ENCODE measurements at regions of chr19 and their contacts with region 1.

Region 1: DNA sequence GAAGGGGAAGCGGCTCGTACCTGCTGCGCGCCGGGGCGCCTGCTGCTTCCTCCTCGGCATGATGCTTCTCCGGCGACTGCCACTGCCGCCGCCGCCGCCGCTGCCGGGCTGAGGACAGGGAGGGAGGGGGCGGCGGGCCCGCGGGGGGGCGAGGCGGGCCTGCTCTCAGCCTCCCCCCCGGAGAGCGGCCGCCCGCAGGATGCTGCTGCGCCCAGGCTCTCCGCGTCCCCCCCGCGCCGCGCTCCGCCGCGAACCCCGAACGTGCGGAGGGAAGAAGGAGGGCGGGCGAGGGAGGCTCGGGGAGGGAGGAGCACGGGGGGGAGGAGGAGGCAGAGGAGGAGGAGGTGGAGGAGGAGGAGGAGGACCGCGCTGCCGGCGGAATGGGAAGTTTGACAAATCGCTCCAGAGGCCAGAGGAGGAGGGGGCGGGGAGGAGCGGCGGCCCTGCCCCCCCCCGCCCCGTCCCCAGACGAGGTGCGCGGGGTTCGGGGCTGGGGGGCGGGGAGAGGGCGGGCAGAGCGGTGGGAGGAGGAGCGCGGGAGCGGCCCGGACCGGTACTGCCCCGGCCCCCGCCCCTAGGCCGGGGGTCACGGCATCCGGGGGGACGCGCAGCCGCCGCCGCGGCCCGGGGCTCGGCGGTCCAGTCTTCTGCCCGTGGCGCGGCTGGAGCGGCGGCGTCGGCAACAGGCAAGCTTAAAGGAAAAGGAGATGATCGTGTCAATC is at the start of gene TSHZ3:
- H3K4me3 Mint-ChIP-seq: peak within 1 kb of the TSS; percentile 91
- H3K27ac Mint-ChIP-seq: peak within 1 kb of the TSS; percentile 75
- H3K4me1 Mint-ChIP-seq: peaks cover 52% of the 10 kb centered on the region
- H3K27me3 Mint-ChIP-seq: peaks cover 50% of the 10 kb centered on the region

Region 2: GRCh38 chr19:30870876-30871275 is 478.4 kb before region 1 on chr19:
- intact Hi-C with region 1: loop called (anchors 10 kb)
- H3K4me3 Mint-ChIP-seq: no peak overlapping the region
- H3K27ac Mint-ChIP-seq: no peak overlapping the region
- H3K4me1 Mint-ChIP-seq: peaks cover 9% of the 10 kb centered on the region
- H3K27me3 Mint-ChIP-seq: peaks cover 3% of the 10 kb centered on the region

Region 3: DNA sequence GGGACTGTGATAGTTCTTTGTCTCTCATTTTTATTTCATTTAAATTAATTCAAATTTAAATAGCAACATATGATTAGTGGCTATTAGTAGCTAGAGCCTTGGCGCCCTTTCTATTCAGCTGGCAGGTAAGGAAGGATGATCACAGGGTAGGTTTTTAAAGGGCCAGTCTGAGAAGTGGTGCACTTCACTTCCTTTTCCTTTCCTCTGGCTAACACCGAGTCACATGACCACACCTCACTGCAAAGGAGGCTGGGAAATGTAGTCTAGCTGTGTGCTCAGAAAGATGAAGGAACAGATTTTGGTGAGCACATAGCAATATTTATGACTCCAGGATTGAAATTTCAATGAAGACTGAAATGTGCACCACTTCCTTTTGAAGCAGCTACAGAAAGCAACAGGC is 128.8 kb before region 1 on chr19:
- intact Hi-C with region 1: loop called (anchors 10 kb)
- H3K4me3 Mint-ChIP-seq: no peak overlapping the region
- H3K27ac Mint-ChIP-seq: no peak overlapping the region
- H3K4me1 Mint-ChIP-seq: peaks cover 1% of the 10 kb centered on the region
- H3K27me3 Mint-ChIP-seq: peaks cover 8% of the 10 kb centered on the region

Region 4: GRCh38 chr19:31312009-31312676 is 37.2 kb before region 1 on chr19:
- intact Hi-C with region 1: loop called (anchors 5 kb)
- H3K4me3 Mint-ChIP-seq: peak overlapping the region; percentile 37
- H3K27ac Mint-ChIP-seq: peak overlapping the region; percentile 78
- H3K4me1 Mint-ChIP-seq: peaks cover 96% of the 10 kb centered on the region
- H3K27me3 Mint-ChIP-seq: no peaks in the 10 kb centered on the region

Region 5: GRCh38 chr19:31560086-31561060 is 211.1 kb after region 1 on chr19:
- intact Hi-C with region 1: no loop called
- H3K4me3 Mint-ChIP-seq: no peak overlapping the region
- H3K27ac Mint-ChIP-seq: no peak overlapping the region
- H3K4me1 Mint-ChIP-seq: no peaks in the 10 kb centered on the region
- H3K27me3 Mint-ChIP-seq: no peaks in the 10 kb centered on the region

Region 6: GRCh38 chr19:31627620-31628361 is 278.5 kb after region 1 on chr19:
- intact Hi-C with region 1: no loop called
- H3K4me3 Mint-ChIP-seq: no peak overlapping the region
- H3K27ac Mint-ChIP-seq: no peak overlapping the region
- H3K4me1 Mint-ChIP-seq: no peaks in the 10 kb centered on the region
- H3K27me3 Mint-ChIP-seq: no peaks in the 10 kb centered on the region

Region 7: DNA sequence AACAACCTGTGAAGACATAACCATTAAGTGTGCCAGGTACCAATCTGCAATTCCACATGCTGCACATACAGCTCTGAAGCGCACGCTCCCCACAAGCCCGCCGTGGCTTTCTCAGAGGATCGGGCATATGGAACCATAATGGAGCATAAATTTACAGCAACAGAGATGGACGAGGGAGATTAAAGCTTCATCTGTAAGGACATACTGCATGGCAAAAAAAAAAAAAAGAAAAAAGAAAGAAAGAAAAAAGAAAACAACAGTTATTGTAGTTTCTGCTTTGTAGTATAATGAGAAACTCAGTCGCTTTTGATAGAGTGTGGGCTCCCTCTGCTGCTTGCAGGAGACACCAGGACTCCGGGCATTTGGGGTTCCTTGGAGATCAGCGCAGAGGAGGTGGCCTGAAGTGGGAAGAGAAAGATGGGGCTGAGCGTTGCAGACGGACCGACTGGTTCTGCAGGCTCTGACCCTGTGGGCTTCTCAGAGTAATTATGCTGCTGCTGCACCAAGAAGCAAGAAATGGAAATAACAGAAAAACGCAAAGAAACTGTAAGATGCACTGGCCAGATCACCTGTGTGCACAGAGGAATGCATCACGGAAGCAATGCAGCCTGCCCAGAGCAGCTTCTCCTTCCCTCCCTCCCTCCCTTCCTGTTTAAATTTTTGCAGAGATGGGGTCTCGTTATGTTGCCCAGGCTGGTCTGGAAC is 1220.9 kb after region 1 on chr19:
- intact Hi-C with region 1: loop called (anchors 10 kb)
- H3K4me3 Mint-ChIP-seq: no peak overlapping the region
- H3K27ac Mint-ChIP-seq: no peak overlapping the region
- H3K4me1 Mint-ChIP-seq: no peaks in the 10 kb centered on the region
- H3K27me3 Mint-ChIP-seq: peaks cover 65% of the 10 kb centered on the region

Measured in dendritic cell treated with granulocyte-macrophage colony-stimulating factor and Interleukin-4, amounts not matched to agents 40 ng/mL and 50 ng/mL, for 4 days (primary cell).